ENCODE measurements at regions of chr6 and their contacts with region 1.

Region 1: GRCh38 chr6:23174781-23175361 is 605.5 kb downstream of the HDGFL1 start:
- DNase-seq: peak; percentile 97
- ATAC-seq: peak; percentile 89
- H3K4me3 ChIP-seq: no peak overlapping the region
- H3K27ac ChIP-seq: peak overlapping the region; percentile 92; the same call in 1 of the 2 replicates
- H3K4me1 ChIP-seq: peaks cover 10% of the 10 kb centered on the region
- H3K27me3 ChIP-seq: no peaks in the 10 kb centered on the region
- CTCF ChIP-seq: no peak
- POLR2A ChIP-seq: no peak
- RAD21 ChIP-seq: no peak; the same call in 1 of the 2 replicates

Region 2: GRCh38 chr6:22737331-22737730 is 437.5 kb before region 1 on chr6:
- CTCF ChIA-PET with region 1: no interaction called
- POLR2A ChIA-PET with region 1: no interaction called
- dilution Hi-C with region 1: no loop called
- in situ Hi-C with region 1: no loop called
- intact Hi-C with region 1: loop called (anchors 10 kb)
- DNase-seq: peak; percentile 53
- ATAC-seq: peak; percentile 63
- H3K4me3 ChIP-seq: no peak overlapping the region
- H3K27ac ChIP-seq: no peak overlapping the region
- H3K4me1 ChIP-seq: no peaks in the 10 kb centered on the region; the same call in 1 of the 2 replicates
- H3K27me3 ChIP-seq: no peaks in the 10 kb centered on the region
- CTCF ChIP-seq: peak; percentile 49
- POLR2A ChIP-seq: no peak
- RAD21 ChIP-seq: peak; percentile 64

Region 3: GRCh38 chr6:23003671-23004467 is 171.0 kb before region 1 on chr6:
- CTCF ChIA-PET with region 1: no interaction called
- POLR2A ChIA-PET with region 1: no interaction called
- dilution Hi-C with region 1: no loop called
- in situ Hi-C with region 1: no loop called
- intact Hi-C with region 1: no loop called
- DNase-seq: peak; percentile 86
- ATAC-seq: peak; percentile 69
- H3K4me3 ChIP-seq: peak overlapping the region; percentile 17; the same call in 1 of the 2 replicates
- H3K27ac ChIP-seq: peak overlapping the region; percentile 2; the same call in 1 of the 2 replicates
- H3K4me1 ChIP-seq: 0 out of 2 replicates have a peak, but pooled peaks cover 2% of the 10 kb centered on the region
- H3K27me3 ChIP-seq: no peaks in the 10 kb centered on the region
- CTCF ChIP-seq: no peak
- POLR2A ChIP-seq: no peak
- RAD21 ChIP-seq: no peak

Region 4: DNA sequence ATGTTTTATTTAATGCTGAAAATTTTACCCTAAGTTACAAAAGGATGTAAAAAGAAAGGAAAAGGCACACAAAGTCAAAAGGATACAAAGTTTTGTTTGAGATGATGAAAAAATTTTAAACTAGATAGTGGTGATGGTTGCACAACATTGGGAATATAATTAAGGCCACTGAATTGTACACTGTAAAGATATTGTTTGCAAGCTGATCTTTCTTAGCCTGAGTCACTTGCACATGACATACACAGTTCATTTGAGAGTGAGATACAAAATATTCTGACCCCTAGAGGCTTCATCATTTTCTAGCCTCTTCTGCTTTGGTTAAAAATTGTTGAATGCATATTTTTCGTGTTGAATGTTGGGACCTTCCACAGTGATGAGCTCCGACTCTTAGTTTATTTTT is 142.9 kb before region 1 on chr6:
- CTCF ChIA-PET with region 1: no interaction called
- POLR2A ChIA-PET with region 1: no interaction called
- dilution Hi-C with region 1: no loop called
- in situ Hi-C with region 1: no loop called
- intact Hi-C with region 1: loop called (anchors 10 kb)
- DNase-seq: peak; percentile 66
- ATAC-seq: peak; percentile 89
- H3K4me3 ChIP-seq: no peak overlapping the region
- H3K27ac ChIP-seq: peak overlapping the region; percentile 79; the same call in 1 of the 2 replicates
- H3K4me1 ChIP-seq: peaks cover 3% of the 10 kb centered on the region
- H3K27me3 ChIP-seq: no peaks in the 10 kb centered on the region
- CTCF ChIP-seq: no peak
- POLR2A ChIP-seq: no peak
- RAD21 ChIP-seq: 0 out of 2 replicates have a peak, but pooled peaks have one; percentile 2

Region 5: GRCh38 chr6:23106951-23107350 is 67.9 kb before region 1 on chr6:
- CTCF ChIA-PET with region 1: no interaction called
- POLR2A ChIA-PET with region 1: no interaction called
- dilution Hi-C with region 1: no loop called
- in situ Hi-C with region 1: no loop called
- intact Hi-C with region 1: loop called (anchors 2 kb)
- DNase-seq: peak; percentile 92
- ATAC-seq: peak; percentile 97
- H3K4me3 ChIP-seq: no peak overlapping the region
- H3K27ac ChIP-seq: no peak overlapping the region
- H3K4me1 ChIP-seq: peaks cover 2% of the 10 kb centered on the region; the same call in 1 of the 2 replicates
- H3K27me3 ChIP-seq: no peaks in the 10 kb centered on the region
- CTCF ChIP-seq: no peak
- POLR2A ChIP-seq: no peak
- RAD21 ChIP-seq: no peak

Measured in IMR-90 (cell line).